PC-9 (cell line): ENCODE measurements at regions of chr3 and their contacts with region 1.

Region 1: DNA sequence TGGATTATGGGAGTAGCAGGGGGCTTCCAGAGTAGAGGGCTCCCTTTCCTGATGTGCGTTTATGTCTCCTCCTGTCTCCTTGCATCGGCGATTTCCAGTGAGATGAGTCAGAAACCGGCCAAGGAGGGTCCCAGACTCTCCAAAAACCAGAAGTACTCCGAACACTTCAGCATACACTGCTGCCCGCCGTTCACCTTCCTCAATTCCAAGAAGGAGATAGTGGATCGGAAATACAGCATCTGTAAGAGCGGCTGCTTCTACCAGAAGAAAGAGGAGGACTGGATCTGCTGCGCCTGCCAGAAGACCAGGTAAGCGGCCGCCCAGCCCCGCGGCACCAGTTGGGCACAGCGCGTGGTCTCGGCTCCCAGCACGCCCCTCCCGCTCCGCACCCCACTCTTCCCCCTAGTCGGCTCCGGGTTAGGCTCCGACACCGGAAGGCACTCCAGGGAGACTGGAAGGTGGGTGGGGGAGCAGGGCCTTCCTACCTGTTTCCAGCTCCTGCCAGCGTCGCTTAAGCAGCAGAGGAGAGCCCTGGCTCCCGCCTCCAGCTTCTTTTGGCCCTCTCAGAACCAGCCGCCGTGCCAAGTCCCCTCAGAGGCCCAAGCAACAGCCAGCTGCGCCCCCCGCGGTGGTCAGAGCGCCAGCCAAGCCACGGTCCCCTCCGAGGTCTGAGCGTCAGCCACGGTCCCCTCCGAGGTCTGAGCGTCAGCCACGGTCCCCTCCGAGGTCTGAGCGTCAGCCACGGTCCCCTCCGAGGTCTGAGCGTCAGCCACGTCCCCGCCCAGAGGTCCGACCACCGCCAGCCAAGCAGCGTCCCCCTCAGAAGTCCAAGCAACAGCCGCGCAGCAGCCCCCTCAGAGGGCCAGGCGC is 34.7 kb downstream of the MOBP start:
- DNase-seq: no peak
- H3K4me3 ChIP-seq: no peak overlapping the region
- H3K27ac ChIP-seq: no peak overlapping the region
- H3K4me1 ChIP-seq: no peaks in the 10 kb centered on the region
- H3K27me3 ChIP-seq: peaks cover 29% of the 10 kb centered on the region
- CTCF ChIP-seq: no peak

Region 2: DNA sequence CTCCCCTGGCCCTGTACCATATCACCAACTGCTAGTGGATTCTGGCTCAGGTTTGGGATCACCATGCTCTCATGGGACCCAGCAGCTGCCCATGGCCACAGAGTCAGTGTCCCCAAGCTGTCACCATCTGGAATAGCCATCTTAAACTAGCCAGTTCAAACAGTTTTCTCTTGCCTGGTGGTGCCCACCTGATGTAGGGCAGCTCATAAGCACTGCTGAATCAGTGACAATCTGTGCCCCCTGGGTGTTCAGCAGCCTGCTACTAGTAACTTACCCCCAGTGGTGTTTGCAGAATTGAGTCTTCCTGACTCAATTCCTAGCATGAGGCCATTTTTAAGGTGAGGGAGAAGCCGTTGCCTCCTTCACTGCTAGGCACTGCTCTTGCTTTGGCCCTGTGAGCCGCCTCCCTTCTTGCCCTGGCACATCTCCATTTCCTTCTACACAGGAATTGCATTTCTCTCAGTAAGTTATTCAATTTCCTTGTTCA is 87.7 kb before region 1 on chr3:
- CTCF ChIA-PET with region 1: no interaction called
- POLR2A ChIA-PET with region 1: no interaction called
- intact Hi-C with region 1: loop called (anchors 2 kb)
- DNase-seq: no peak
- H3K4me3 ChIP-seq: no peak overlapping the region
- H3K27ac ChIP-seq: peak overlapping the region; percentile 5; the same call in 1 of the 2 replicates
- H3K4me1 ChIP-seq: peaks cover 5% of the 10 kb centered on the region; the same call in 1 of the 2 replicates
- H3K27me3 ChIP-seq: no peaks in the 10 kb centered on the region
- CTCF ChIP-seq: no peak

Region 3: DNA sequence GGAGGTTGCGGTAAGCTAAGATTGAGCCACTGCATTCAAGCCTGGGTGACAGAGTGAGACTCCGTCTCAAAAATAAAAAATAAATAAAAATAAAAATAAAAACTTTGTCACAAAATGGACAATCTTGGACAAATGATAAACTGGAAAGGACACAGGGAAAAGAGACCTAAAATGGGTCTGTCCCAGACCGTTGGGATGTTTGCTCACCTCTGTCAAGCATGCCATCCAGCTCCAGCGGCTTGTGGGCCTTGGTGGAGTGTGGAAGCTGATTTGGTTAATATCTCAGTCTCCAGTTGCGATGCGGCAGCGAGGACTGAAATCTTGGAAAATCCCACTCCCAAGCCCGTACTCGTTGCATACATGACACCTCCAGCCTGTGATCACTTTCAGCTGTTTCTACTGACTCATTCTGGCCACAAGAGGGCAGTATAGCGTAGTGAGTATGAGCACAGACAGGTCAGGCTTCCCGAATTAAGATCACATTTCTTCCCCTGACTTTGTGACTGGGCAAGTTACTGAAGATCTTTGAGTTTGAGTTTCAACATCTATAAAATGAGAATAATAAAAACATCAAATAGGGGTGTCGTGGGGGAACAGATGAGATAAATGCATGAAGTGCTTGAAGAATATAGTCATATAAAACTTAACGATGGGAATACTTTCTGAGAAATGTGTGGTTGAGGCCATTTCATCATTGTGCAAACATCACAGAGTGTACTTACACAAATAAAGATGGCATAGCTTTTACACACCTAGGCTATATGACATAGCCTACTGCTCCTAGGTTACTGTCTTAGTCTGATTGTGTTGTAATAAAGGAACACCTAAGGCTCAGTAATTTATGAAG is 54.3 kb before region 1 on chr3:
- CTCF ChIA-PET with region 1: no interaction called
- POLR2A ChIA-PET with region 1: no interaction called
- intact Hi-C with region 1: loop called (anchors 2 kb)
- DNase-seq: peak; percentile 46 to 52
- H3K4me3 ChIP-seq: no peak overlapping the region
- H3K27ac ChIP-seq: no peak overlapping the region
- H3K4me1 ChIP-seq: no peaks in the 10 kb centered on the region
- H3K27me3 ChIP-seq: 0 out of 2 replicates have a peak, but pooled peaks cover 4% of the 10 kb centered on the region
- CTCF ChIP-seq: peak; percentile 87

Region 4: GRCh38 chr3:39485547-39485946 is 16.7 kb before region 1 on chr3:
- CTCF ChIA-PET with region 1: interaction called, 16 read pairs
- POLR2A ChIA-PET with region 1: no interaction called
- intact Hi-C with region 1: no loop called
- DNase-seq: no peak
- H3K4me3 ChIP-seq: no peak overlapping the region
- H3K27ac ChIP-seq: no peak overlapping the region
- H3K4me1 ChIP-seq: no peaks in the 10 kb centered on the region
- H3K27me3 ChIP-seq: peaks cover 54% of the 10 kb centered on the region
- CTCF ChIP-seq: no peak